Activated CD4-positive, alpha-beta T cell treated with anti-CD3 and anti-CD28 coated beads for 36 hours (primary cell): ENCODE measurements at regions of chr1 and their contacts with region 1.

Region 1: DNA sequence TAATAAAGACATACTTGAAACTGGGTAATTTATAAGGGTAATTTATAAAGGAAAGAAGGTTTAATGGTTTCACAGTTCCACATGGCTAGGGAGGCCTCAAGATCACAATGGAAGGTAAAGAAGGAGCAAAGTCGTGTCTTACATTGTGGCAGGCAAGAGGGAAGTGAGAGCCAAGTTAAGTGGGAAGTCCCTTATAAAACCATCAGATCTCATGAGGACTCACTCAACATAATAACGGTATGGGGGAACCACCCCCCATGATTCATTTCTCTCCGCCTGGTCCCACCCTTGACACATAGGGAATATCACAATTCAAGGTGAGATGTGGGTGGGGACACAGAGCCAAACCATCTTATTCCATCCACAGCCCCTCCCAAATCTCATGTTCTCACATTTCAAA is 76.8 kb upstream of the ZNF678 start:
- DNase-seq: no peak
- ATAC-seq: no peak
- H3K4me3 Mint-ChIP-seq: no peak overlapping the region
- H3K27ac Mint-ChIP-seq: no peak overlapping the region
- H3K4me1 Mint-ChIP-seq: no peaks in the 10 kb centered on the region
- H3K27me3 Mint-ChIP-seq: no peaks in the 10 kb centered on the region

Region 2: DNA sequence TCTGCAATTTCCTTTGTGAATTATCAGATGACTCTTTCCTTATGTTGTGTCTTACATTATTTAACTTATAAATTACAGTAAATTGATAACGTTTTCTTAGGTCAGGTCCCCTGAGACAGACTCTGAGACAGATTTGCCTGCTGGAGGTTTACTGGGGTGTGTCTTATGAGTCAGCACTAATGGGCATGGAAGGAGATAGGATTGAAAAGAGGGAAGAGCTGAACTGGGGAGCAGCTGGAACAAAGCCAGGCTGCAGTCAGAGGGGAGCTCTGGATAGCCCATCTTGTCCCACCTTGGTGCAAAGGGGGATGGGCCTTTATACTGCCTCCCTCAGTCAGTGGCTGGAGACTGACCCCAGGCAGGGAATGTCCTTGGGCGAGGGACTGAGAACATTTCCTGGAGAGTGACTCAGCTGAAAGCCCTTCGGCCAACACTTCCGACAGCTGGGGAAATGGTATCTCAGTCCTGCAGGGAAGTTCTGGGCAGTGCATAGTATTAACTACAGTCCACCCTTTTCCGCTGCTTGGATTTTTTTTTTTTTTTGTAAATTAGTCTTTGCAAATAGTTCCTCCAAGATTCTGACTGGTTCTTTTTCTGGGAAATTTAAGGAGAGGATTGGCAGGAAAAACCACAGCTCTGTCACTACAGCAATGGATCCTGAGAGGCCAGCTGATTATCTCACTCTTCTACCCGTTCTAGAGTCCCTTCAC is 129.2 kb before region 1 on chr1:
- CTCF ChIA-PET with region 1: no interaction called
- POLR2A ChIA-PET with region 1: no interaction called
- intact Hi-C with region 1: no loop called
- DNase-seq: no peak
- ATAC-seq: no peak
- H3K4me3 Mint-ChIP-seq: no peak overlapping the region
- H3K27ac Mint-ChIP-seq: no peak overlapping the region
- H3K4me1 Mint-ChIP-seq: no peaks in the 10 kb centered on the region
- H3K27me3 Mint-ChIP-seq: peaks cover 4% of the 10 kb centered on the region

Region 3: DNA sequence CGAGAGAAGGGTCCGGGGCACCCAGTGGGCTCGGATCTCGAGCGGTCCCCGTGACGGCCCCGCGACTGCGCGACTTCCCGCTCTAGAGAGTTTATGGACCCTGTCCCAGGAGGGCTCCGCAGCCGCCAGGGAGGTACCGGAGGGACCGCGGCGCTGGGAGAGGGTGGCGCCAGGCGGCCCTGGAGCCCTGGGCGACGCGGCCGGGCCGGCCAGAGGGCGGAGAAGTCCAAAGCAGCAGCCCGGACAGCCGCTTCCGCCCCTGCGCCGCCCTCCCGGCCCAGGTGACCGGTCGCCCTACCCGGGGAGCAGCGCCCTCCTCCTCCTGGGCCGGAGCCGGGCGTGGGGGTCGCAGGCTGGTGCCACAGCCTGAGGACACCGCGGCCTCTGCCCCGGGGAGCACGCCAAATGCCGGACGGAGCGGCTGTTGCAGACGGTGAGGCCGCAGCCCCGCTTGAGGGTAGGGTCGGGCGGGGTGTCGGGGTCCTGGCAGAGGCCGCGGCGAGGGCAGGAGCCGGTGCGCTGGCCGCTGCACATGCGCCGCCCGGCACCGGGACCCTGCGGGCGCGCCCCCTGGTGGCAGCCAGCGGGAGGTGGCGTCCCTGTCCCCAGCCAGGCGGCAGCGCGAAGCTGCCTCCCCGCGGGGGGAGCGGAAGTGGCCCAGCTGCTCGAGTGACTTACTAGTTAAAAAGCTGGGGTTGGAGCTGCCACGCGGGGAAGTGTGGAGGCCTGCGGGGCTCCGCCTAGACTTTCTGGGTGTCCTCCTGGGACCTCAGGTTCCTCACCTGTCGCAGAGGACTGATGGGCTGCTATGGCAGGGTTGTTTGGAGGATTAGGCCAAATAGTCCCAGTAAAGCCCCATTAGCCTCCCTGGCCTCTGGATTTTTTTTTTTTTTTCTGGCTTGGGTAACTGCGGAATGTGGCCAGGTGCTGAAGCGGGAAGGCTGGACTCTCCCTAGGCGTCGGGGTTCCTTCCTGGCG is 55.9 kb after region 1 on chr1:
- CTCF ChIA-PET with region 1: no interaction called
- POLR2A ChIA-PET with region 1: no interaction called
- intact Hi-C with region 1: loop called in 1 of 2 experiments (anchors 1 kb)
- DNase-seq: peak; percentile 95
- ATAC-seq: peak; percentile 97
- H3K4me3 Mint-ChIP-seq: peak overlapping the region; percentile 47
- H3K27ac Mint-ChIP-seq: peak overlapping the region; percentile 72
- H3K4me1 Mint-ChIP-seq: peaks cover 4% of the 10 kb centered on the region
- H3K27me3 Mint-ChIP-seq: no peaks in the 10 kb centered on the region

Region 4: GRCh38 chr1:227563324-227564201 is 77.0 kb after region 1 on chr1 and contains the start of gene ZNF678:
- CTCF ChIA-PET with region 1: no interaction called
- POLR2A ChIA-PET with region 1: no interaction called
- intact Hi-C with region 1: no loop called
- DNase-seq: peak; percentile 95
- ATAC-seq: peak; percentile 96
- H3K4me3 Mint-ChIP-seq: peak within 1 kb of the TSS; percentile 90
- H3K27ac Mint-ChIP-seq: peak within 1 kb of the TSS; percentile 93
- H3K4me1 Mint-ChIP-seq: peaks cover 34% of the 10 kb centered on the region
- H3K27me3 Mint-ChIP-seq: peaks cover 25% of the 10 kb centered on the region
- total RNA-seq, gene ZNF678: 7.0 to 7.7 TPM

Region 5: DNA sequence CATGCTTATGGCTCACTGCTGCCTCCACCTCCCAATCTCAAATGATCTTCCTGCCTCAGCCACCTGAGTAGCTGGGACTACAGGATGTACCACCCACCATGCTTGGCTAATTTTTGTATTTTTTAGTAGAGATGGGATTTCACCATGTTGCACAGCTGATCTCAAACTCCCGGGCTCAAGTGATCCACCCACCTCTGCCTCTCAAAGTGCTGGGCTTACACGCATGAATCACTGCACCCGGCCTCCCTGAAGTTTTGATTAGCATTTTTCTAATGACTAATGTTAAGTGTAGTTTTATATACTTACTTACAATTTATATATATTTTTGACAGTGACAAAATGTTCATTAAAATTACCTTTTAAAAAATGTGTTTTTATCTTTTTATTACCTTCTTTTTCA is 117.9 kb after region 1 on chr1:
- CTCF ChIA-PET with region 1: no interaction called
- POLR2A ChIA-PET with region 1: no interaction called
- intact Hi-C with region 1: no loop called
- DNase-seq: no peak
- ATAC-seq: no peak
- H3K4me3 Mint-ChIP-seq: no peak overlapping the region
- H3K27ac Mint-ChIP-seq: no peak overlapping the region
- H3K4me1 Mint-ChIP-seq: no peaks in the 10 kb centered on the region
- H3K27me3 Mint-ChIP-seq: no peaks in the 10 kb centered on the region

Region 6: GRCh38 chr1:227728059-227728891 is 241.7 kb after region 1 on chr1:
- CTCF ChIA-PET with region 1: no interaction called
- POLR2A ChIA-PET with region 1: no interaction called
- intact Hi-C with region 1: loop called in 1 of 2 experiments (anchors 1 kb)
- DNase-seq: peak; percentile 89
- ATAC-seq: peak; percentile 62
- H3K4me3 Mint-ChIP-seq: peak overlapping the region; percentile 76
- H3K27ac Mint-ChIP-seq: peak overlapping the region; percentile 81
- H3K4me1 Mint-ChIP-seq: peaks cover 16% of the 10 kb centered on the region
- H3K27me3 Mint-ChIP-seq: peaks cover 3% of the 10 kb centered on the region

Region 7: DNA sequence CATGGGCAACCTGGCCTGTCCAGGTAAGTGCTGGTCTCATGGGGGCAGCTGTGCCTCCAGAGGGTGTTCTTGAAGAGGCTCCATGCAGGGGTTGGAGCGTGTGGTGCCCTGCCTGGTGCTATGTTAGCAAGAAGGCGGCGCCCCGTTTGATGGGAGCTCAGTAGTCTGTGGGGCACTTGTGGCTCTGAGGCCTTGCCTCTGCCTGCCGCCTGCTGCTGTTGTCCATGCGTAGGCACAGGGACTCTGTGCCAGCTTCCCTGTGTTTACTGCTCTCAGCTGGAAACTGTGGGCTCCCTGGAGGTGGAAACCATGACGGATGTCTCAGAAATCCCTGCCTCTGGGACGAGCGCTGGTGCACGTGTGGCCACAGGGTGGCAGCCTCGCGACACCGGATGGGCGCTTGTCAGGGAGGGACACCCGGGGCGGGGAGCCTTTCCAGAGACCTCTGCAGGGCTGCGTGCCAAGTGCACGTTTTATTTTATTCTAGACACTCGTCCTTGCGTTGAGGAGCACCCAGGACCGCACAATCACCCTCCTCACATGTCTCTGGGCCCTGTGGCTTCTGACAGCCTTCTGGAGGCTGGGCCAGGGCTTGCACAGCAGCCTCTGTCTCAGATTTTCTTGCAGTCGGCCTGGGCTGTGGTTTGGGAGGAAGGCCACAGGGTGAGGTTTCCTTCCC is 275.8 kb after region 1 on chr1:
- CTCF ChIA-PET with region 1: interaction called, 4 read pairs
- POLR2A ChIA-PET with region 1: no interaction called
- intact Hi-C with region 1: loop called in 1 of 2 experiments (anchors 1 kb)
- DNase-seq: peak; percentile 93
- ATAC-seq: peak; percentile 72
- H3K4me3 Mint-ChIP-seq: no peak overlapping the region
- H3K27ac Mint-ChIP-seq: peak overlapping the region; percentile 8
- H3K4me1 Mint-ChIP-seq: peaks cover 90% of the 10 kb centered on the region
- H3K27me3 Mint-ChIP-seq: no peaks in the 10 kb centered on the region

Region 8: DNA sequence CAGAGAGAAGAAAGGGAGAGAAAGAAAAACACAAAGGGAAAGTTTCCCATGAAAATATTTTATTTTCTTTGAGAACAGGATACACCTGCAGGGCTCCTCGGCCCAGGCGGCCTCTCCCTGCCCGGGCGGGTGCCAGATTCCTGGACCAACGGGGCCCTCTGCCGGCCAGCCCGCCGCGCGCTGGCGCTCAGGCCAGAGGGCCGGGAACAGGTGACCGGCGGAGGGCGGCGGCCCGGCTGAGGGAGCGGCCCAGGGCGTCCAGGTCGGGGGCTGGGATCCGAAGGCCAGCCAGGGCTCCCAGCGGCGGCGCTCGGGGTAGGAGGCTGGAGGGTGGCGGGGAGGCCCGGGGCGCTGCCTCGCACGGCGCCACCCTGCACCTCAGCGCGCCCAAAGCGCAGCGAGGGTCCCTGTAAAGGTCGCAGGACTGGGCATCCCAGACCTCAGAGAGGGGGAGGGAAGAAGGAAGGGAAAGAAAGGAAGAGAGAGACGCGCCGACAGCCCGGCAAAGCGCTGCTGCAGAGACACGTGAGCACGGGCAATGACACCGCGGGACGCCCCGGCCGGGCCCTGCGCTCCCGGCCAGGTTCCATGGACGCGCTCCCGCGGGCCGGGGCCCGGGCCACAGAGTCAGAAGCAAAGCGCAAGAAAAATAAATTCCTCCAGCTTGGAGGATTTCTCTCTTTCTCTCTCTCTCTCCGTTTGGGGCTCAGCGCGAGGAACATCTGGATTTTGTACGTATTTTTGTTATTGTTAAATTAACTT is 460.2 kb after region 1 on chr1:
- CTCF ChIA-PET with region 1: interaction called, 3 read pairs
- POLR2A ChIA-PET with region 1: no interaction called
- intact Hi-C with region 1: loop called in 1 of 2 experiments (anchors 2 kb)
- DNase-seq: peak; percentile 78
- ATAC-seq: peak; percentile 82
- H3K4me3 Mint-ChIP-seq: peak overlapping the region; percentile 57
- H3K27ac Mint-ChIP-seq: no peak overlapping the region
- H3K4me1 Mint-ChIP-seq: peaks cover 12% of the 10 kb centered on the region
- H3K27me3 Mint-ChIP-seq: peaks cover 17% of the 10 kb centered on the region

Region 9: GRCh38 chr1:227954163-227954850 is 467.7 kb after region 1 on chr1:
- CTCF ChIA-PET with region 1: interaction called, 5 read pairs
- POLR2A ChIA-PET with region 1: no interaction called
- intact Hi-C with region 1: loop called (anchors 1 kb)
- DNase-seq: no peak
- ATAC-seq: no peak
- H3K4me3 Mint-ChIP-seq: no peak overlapping the region
- H3K27ac Mint-ChIP-seq: no peak overlapping the region
- H3K4me1 Mint-ChIP-seq: peaks cover 2% of the 10 kb centered on the region
- H3K27me3 Mint-ChIP-seq: peaks cover 33% of the 10 kb centered on the region